ENCODE measurements at regions of chr1 and their contacts with region 1.

Region 1: GRCh38 chr1:93846211-93846991 is 32.6 kb downstream of the DNTTIP2 start:
- DNase-seq: peak; percentile 89
- H3K4me3 Mint-ChIP-seq: peak overlapping the region; percentile 84
- H3K27ac Mint-ChIP-seq: peak overlapping the region; percentile 70
- H3K4me1 Mint-ChIP-seq: peaks cover 20% of the 10 kb centered on the region
- H3K27me3 Mint-ChIP-seq: no peaks in the 10 kb centered on the region
- CTCF ChIP-seq: no peak

Region 2: GRCh38 chr1:93304716-93305138 is 541.7 kb before region 1 on chr1:
- CTCF ChIA-PET with region 1: interaction called, 17 read pairs
- intact Hi-C with region 1: loop called (anchors 10 kb)
- DNase-seq: peak; percentile 57
- H3K4me3 Mint-ChIP-seq: no peak overlapping the region
- H3K27ac Mint-ChIP-seq: no peak overlapping the region
- H3K4me1 Mint-ChIP-seq: no peaks in the 10 kb centered on the region
- H3K27me3 Mint-ChIP-seq: no peaks in the 10 kb centered on the region
- CTCF ChIP-seq: peak; percentile 68

Region 3: DNA sequence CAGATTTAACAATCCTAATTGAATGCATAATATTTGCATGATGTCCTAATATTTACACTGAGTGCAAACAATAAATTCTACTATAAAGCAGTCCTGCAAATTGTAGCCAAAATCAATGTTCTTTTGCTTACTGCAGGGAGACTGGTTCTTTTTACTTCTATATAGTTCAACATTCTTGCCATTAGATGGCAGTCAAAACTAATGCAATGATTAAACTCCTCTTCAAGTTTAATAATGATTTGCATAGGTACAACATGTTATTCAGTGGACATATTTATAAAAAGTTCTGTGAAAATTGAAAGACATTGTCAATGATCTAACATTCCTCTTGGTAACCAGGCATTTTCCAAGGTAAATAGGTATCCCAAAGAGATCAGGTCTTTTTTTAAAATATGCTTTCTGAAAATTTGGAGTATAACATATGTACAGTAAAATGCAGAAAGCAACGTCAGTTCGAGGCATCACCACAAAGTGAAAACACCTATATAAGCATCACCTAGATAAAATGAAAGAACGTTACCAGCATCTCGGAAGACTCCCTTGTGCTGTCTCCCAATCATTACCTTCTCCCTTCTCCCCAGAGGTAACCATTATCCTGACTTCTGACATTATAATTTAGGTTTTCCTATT is 408.3 kb before region 1 on chr1:
- CTCF ChIA-PET with region 1: no interaction called
- intact Hi-C with region 1: loop called (anchors 1 kb)
- DNase-seq: no peak
- H3K4me3 Mint-ChIP-seq: no peak overlapping the region
- H3K27ac Mint-ChIP-seq: no peak overlapping the region
- H3K4me1 Mint-ChIP-seq: peaks cover 14% of the 10 kb centered on the region
- H3K27me3 Mint-ChIP-seq: no peaks in the 10 kb centered on the region
- CTCF ChIP-seq: peak; percentile 43

Region 4: GRCh38 chr1:93552741-93553455 is 293.5 kb before region 1 on chr1:
- CTCF ChIA-PET with region 1: interaction called, 3 read pairs
- intact Hi-C with region 1: loop called (anchors 10 kb)
- DNase-seq: peak; percentile 36
- H3K4me3 Mint-ChIP-seq: peak overlapping the region; percentile 42
- H3K27ac Mint-ChIP-seq: peak overlapping the region; percentile 68
- H3K4me1 Mint-ChIP-seq: peaks cover 58% of the 10 kb centered on the region
- H3K27me3 Mint-ChIP-seq: no peaks in the 10 kb centered on the region
- CTCF ChIP-seq: no peak

Region 5: GRCh38 chr1:93629099-93630059 is 217.0 kb before region 1 on chr1:
- CTCF ChIA-PET with region 1: interaction called, 42 read pairs
- intact Hi-C with region 1: loop called (anchors 1 kb)
- DNase-seq: peak; percentile 49
- H3K4me3 Mint-ChIP-seq: no peak overlapping the region
- H3K27ac Mint-ChIP-seq: peak overlapping the region; percentile 7
- H3K4me1 Mint-ChIP-seq: peaks cover 38% of the 10 kb centered on the region
- H3K27me3 Mint-ChIP-seq: no peaks in the 10 kb centered on the region
- CTCF ChIP-seq: peak; percentile 77

Region 6: GRCh38 chr1:93744299-93744988 is 102.0 kb before region 1 on chr1:
- CTCF ChIA-PET with region 1: no interaction called
- intact Hi-C with region 1: no loop called
- DNase-seq: no peak
- H3K4me3 Mint-ChIP-seq: no peak overlapping the region
- H3K27ac Mint-ChIP-seq: no peak overlapping the region
- H3K4me1 Mint-ChIP-seq: no peaks in the 10 kb centered on the region
- H3K27me3 Mint-ChIP-seq: peaks cover 21% of the 10 kb centered on the region
- CTCF ChIP-seq: no peak

Region 7: GRCh38 chr1:93814059-93814794 is 32.2 kb before region 1 on chr1:
- CTCF ChIA-PET with region 1: interaction called, 31 read pairs
- intact Hi-C with region 1: no loop called
- DNase-seq: peak; percentile 68
- H3K4me3 Mint-ChIP-seq: no peak overlapping the region
- H3K27ac Mint-ChIP-seq: no peak overlapping the region
- H3K4me1 Mint-ChIP-seq: peaks cover 11% of the 10 kb centered on the region
- H3K27me3 Mint-ChIP-seq: no peaks in the 10 kb centered on the region
- CTCF ChIP-seq: peak; percentile 90

Region 8: GRCh38 chr1:93909146-93910050 is 63.0 kb after region 1 on chr1 and contains the start of gene GCLM:
- CTCF ChIA-PET with region 1: interaction called, 3 read pairs
- intact Hi-C with region 1: loop called (anchors 5 kb)
- DNase-seq: peak; percentile 97
- H3K4me3 Mint-ChIP-seq: peak within 1 kb of the TSS; percentile 84
- H3K27ac Mint-ChIP-seq: peak within 1 kb of the TSS; percentile 86
- H3K4me1 Mint-ChIP-seq: peaks cover 22% of the 10 kb centered on the region
- H3K27me3 Mint-ChIP-seq: peaks cover 28% of the 10 kb centered on the region
- CTCF ChIP-seq: peak; percentile 75
- total RNA-seq, gene GCLM: 20.2 and 20.9 TPM in 2 replicates

Measured in Calu3 (cell line).